ENCODE measurements at regions of chr12 and their contacts with region 1.

Region 1: GRCh38 chr12:47190271-47190750 is 110.6 kb upstream of the AMIGO2 start:
- DNase-seq: no peak
- H3K4me3 Mint-ChIP-seq: no peak overlapping the region
- H3K27ac Mint-ChIP-seq: peak overlapping the region; percentile 77
- H3K4me1 Mint-ChIP-seq: peaks cover 64% of the 10 kb centered on the region
- H3K27me3 Mint-ChIP-seq: no peaks in the 10 kb centered on the region

Region 2: GRCh38 chr12:47085815-47086252 is 104.5 kb before region 1 on chr12:
- intact Hi-C with region 1: loop called (anchors 2 kb)
- DNase-seq: no peak
- H3K4me3 Mint-ChIP-seq: no peak overlapping the region
- H3K27ac Mint-ChIP-seq: peak overlapping the region; percentile 48
- H3K4me1 Mint-ChIP-seq: peaks cover 55% of the 10 kb centered on the region
- H3K27me3 Mint-ChIP-seq: no peaks in the 10 kb centered on the region

Region 3: GRCh38 chr12:47141467-47141866 is 48.8 kb before region 1 on chr12:
- intact Hi-C with region 1: loop called (anchors 10 kb)
- DNase-seq: no peak
- H3K4me3 Mint-ChIP-seq: no peak overlapping the region
- H3K27ac Mint-ChIP-seq: no peak overlapping the region
- H3K4me1 Mint-ChIP-seq: peaks cover 22% of the 10 kb centered on the region
- H3K27me3 Mint-ChIP-seq: no peaks in the 10 kb centered on the region

Region 4: GRCh38 chr12:47207340-47207717 is 17.0 kb after region 1 on chr12:
- intact Hi-C with region 1: loop called (anchors 1 kb)
- DNase-seq: peak; percentile 39
- H3K4me3 Mint-ChIP-seq: peak overlapping the region; percentile 60
- H3K27ac Mint-ChIP-seq: peak overlapping the region; percentile 86
- H3K4me1 Mint-ChIP-seq: peaks cover 58% of the 10 kb centered on the region
- H3K27me3 Mint-ChIP-seq: no peaks in the 10 kb centered on the region

Measured in activated T-helper 2 cell treated with anti-CD3 and anti-CD28 coated beads, Interferon-gamma antibody, Interleukin-2, Interleukin-4, amounts not matched to agents 10 μg/mL and 5 μg/mL and 100 μg/mL, durations not matched to agents 14 hours and 24 hours and 36 hours (primary cell).